ENCODE measurements at regions of chr15 and their contacts with region 1.

Region 1: DNA sequence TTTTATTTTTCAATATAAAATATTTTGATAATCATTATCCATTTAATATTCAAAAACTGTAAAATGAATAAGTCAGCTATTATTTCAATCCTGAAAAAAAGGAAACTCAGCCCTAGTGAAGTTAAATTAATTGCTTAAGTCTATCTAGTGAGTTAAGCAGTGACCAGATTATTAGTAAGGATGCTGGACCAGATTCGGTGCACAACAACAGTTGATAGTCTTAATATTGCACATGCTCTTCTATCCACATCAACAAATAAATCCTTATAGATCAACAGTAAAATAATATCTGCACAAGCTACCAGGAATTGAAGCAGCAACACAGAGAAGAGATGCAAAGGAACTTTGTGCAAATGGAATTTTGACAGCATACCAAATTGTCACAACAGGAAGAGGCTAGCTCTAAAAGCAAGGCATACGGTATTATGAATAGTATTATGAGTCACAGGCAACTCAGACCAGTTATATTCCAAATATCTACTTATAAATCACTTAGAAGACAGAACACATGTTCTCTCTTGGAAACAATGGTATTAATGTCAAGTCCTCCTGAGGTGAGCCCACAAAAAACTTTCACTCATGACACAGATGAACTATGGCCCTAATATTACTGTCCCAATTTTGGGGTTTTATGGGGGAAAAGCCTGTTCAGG is 24.9 kb downstream of the VPS13C start:
- DNase-seq: no peak
- H3K4me3 Mint-ChIP-seq: no peak overlapping the region
- H3K27ac Mint-ChIP-seq: peak overlapping the region; percentile 8
- H3K4me1 Mint-ChIP-seq: peaks cover 18% of the 10 kb centered on the region
- H3K27me3 Mint-ChIP-seq: no peaks in the 10 kb centered on the region
- CTCF ChIP-seq: no peak

Region 2: GRCh38 chr15:60635507-60636352 is 1399.7 kb before region 1 on chr15:
- CTCF ChIA-PET with region 1: no interaction called
- intact Hi-C with region 1: no loop called
- DNase-seq: peak; percentile 22
- H3K4me3 Mint-ChIP-seq: no peak overlapping the region
- H3K27ac Mint-ChIP-seq: no peak overlapping the region
- H3K4me1 Mint-ChIP-seq: peaks cover 14% of the 10 kb centered on the region
- H3K27me3 Mint-ChIP-seq: peaks cover 17% of the 10 kb centered on the region
- CTCF ChIP-seq: no peak

Region 3: DNA sequence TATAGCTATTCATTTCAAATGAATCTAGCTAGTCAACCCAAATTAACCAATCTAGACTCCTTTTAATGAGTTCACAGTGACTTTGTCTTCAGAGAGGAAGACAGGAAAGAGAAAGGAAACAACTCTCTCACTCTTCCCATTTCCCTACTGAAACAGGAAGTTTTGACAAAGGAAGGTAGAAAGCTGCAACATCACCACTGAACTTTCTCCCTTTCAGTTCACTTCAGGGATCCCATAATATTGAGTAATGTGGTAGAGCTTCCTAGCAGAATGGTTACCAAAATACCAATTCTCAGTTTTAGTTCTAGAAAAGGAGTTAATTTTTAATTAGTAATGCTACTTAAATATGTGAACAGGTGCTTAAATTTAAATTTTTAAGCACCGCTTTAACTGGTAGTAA is 17.3 kb after region 1 on chr15:
- CTCF ChIA-PET with region 1: no interaction called
- intact Hi-C with region 1: loop called (anchors 2 kb)
- DNase-seq: no peak
- H3K4me3 Mint-ChIP-seq: no peak overlapping the region
- H3K27ac Mint-ChIP-seq: no peak overlapping the region
- H3K4me1 Mint-ChIP-seq: peaks cover 54% of the 10 kb centered on the region
- H3K27me3 Mint-ChIP-seq: no peaks in the 10 kb centered on the region
- CTCF ChIP-seq: no peak

Measured in Calu3 (cell line).